ENCODE measurements at regions of chr1 and their contacts with region 1.

Region 1: DNA sequence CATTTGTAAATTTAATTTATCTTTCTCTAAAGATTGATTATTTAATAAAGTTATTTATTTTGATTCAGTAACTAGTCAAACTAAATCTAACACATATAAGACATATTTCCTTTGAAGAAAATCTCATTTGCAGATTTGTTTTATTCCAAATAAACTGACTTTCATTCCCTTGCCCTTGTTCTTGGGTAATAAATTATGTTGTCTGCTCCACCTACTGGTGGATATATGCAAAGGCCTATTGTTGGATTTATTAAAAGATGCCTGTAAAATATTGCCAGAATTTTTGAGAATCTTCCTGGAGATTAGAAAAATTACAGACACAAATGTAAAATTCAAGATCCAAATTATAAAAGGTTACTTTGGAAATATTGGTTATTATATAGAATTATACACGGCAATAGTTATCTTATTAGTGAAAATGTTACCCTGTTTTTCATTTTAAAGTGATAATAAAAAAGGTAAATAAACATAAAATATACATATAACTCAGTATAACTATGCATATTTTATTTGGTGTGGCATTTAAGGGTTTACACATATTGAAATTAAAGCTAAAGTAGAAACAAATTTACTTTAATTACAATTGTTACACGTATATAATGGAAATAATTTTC is 116.1 kb downstream of the SPATA17 start:
- DNase-seq: no peak
- ATAC-seq: 0 out of 3 replicates have a peak, but pooled peaks have one; percentile 40
- H3K4me3 ChIP-seq: no peak overlapping the region
- H3K27ac ChIP-seq: no peak overlapping the region
- H3K4me1 ChIP-seq: no peaks in the 10 kb centered on the region
- H3K27me3 ChIP-seq: no peaks in the 10 kb centered on the region
- CTCF ChIP-seq: peak; percentile 50 to 68 (median 54); a peak in 5 of 6 replicates
- EP300 ChIP-seq: no peak
- POLR2A ChIP-seq: no peak
- RAD21 ChIP-seq: peak; percentile 70

Region 2: DNA sequence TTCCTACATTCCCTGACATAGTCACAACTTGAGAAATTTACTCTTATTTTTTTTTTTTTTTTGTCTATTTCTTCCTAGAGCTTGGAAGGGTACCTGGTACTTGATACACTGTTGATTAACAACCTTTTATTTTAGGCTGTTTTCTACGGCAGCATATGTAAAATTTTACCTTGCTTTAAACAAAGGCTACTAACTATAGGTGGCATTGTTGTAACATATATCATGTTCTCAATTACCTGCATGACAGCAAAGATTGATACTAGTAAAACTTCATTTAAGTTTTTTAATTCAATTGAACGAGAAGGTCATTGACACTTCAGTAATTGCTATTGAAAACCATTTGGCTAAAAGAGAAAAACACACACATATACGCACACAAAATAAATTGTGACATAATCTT is 785.7 kb before region 1 on chr1:
- CTCF ChIA-PET with region 1: no interaction called
- POLR2A ChIA-PET with region 1: no interaction called
- RAD21 ChIA-PET with region 1: no interaction called
- SMC1A ChIA-PET with region 1: no interaction called
- in situ Hi-C with region 1: no loop called
- intact Hi-C with region 1: loop called (anchors 5 kb)
- DNase-seq: no peak
- ATAC-seq: no peak
- H3K4me3 ChIP-seq: no peak overlapping the region
- H3K27ac ChIP-seq: no peak overlapping the region
- H3K4me1 ChIP-seq: no peaks in the 10 kb centered on the region
- H3K27me3 ChIP-seq: no peaks in the 10 kb centered on the region; a peak in 1 of 4 replicates
- CTCF ChIP-seq: peak in 1 of 3 experiments; percentile 37; a peak in 2 of 6 replicates
- EP300 ChIP-seq: no peak
- POLR2A ChIP-seq: no peak
- RAD21 ChIP-seq: 0 out of 2 replicates have a peak, but pooled peaks have one; percentile 12

Region 3: GRCh38 chr1:217431393-217431792 is 315.9 kb before region 1 on chr1:
- CTCF ChIA-PET with region 1: no interaction called
- POLR2A ChIA-PET with region 1: no interaction called
- RAD21 ChIA-PET with region 1: no interaction called
- SMC1A ChIA-PET with region 1: no interaction called
- in situ Hi-C with region 1: no loop called
- intact Hi-C with region 1: loop called (anchors 5 kb)
- DNase-seq: no peak
- ATAC-seq: peak; percentile 40; the same call in 1 of the 3 replicates
- H3K4me3 ChIP-seq: no peak overlapping the region
- H3K27ac ChIP-seq: no peak overlapping the region
- H3K4me1 ChIP-seq: no peaks in the 10 kb centered on the region
- H3K27me3 ChIP-seq: no peaks in the 10 kb centered on the region
- CTCF ChIP-seq: peak in 2 of 3 experiments; percentile 10 to 28; a peak in 3 of 6 replicates
- EP300 ChIP-seq: no peak
- POLR2A ChIP-seq: no peak
- RAD21 ChIP-seq: peak; percentile 51

Region 4: DNA sequence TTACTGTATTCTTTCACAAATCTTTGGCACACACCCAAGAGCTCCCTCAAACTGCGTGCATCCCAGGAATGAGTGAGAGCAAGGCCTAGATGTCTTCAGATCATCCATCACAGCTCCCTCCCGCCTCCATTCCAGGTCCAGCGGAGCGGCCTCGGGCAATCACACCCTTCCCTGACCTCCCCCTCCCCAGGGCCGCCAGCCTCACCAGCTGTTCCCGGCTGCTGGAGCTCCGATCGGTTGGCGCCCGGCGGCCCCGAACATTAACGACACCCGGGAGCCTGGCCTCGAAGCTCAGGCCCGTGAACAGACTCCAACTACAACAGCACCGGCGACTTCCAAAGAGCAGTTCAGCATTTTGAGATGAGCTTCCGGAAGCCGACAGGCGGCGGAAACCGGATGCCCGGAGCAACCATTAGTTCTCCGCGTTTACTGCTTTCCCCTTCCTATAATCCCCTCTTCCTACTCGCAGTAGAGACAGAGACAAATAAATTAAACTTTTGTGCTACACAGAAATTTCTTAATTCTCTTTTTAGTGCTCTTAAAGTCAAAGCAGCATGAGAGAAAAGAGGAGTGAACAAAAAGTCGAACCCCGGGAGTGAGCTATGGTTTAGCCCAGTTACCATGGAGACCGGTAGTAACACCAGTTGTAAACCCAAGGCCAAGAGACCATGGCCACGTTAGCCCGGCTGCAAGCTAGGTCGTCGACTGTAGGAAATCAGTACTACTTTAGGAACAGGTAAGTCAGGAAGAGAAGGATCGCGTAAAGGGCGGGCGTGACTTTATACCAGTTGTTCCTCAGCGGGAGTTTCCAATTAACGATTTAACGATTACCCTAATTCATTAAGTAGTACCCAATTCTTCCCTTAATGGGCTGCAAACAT is 116.3 kb before region 1 on chr1 and contains the starts of genes GPATCH2 and SPATA17:
- CTCF ChIA-PET with region 1: no interaction called
- POLR2A ChIA-PET with region 1: no interaction called
- RAD21 ChIA-PET with region 1: no interaction called
- SMC1A ChIA-PET with region 1: no interaction called
- in situ Hi-C with region 1: no loop called
- intact Hi-C with region 1: no loop called
- DNase-seq: peak; percentile 77
- ATAC-seq: peak; percentile 95
- H3K4me3 ChIP-seq: peak within 1 kb of the TSS; percentile 84
- H3K27ac ChIP-seq: peak within 1 kb of the TSS; percentile 94
- H3K4me1 ChIP-seq: peaks cover 4% of the 10 kb centered on the region; the same call in 1 of the 2 replicates
- H3K27me3 ChIP-seq: no peaks in the 10 kb centered on the region; a peak in 1 of 4 replicates
- CTCF ChIP-seq: 0 out of 6 replicates have a peak, but pooled peaks of 2 of the 3 experiments have one; percentile 6 to 16
- EP300 ChIP-seq: 0 out of 4 replicates have a peak, but pooled peaks of 1 of the 2 experiments have one; percentile 9
- POLR2A ChIP-seq: peak; percentile 90
- RAD21 ChIP-seq: no peak
- polyA plus RNA-seq, gene GPATCH2: 3.2 to 4.8 TPM
- polyA plus RNA-seq, gene SPATA17: 0.08 TPM in 1 of 2 experiments, not detected in the other

Region 5: GRCh38 chr1:217924924-217925323 is 177.7 kb after region 1 on chr1:
- CTCF ChIA-PET with region 1: no interaction called
- POLR2A ChIA-PET with region 1: no interaction called
- RAD21 ChIA-PET with region 1: no interaction called
- SMC1A ChIA-PET with region 1: no interaction called
- in situ Hi-C with region 1: no loop called
- intact Hi-C with region 1: no loop called
- DNase-seq: no peak
- ATAC-seq: no peak
- H3K4me3 ChIP-seq: no peak overlapping the region
- H3K27ac ChIP-seq: no peak overlapping the region
- H3K4me1 ChIP-seq: no peaks in the 10 kb centered on the region
- H3K27me3 ChIP-seq: no peaks in the 10 kb centered on the region
- CTCF ChIP-seq: no peak
- EP300 ChIP-seq: no peak
- POLR2A ChIP-seq: no peak
- RAD21 ChIP-seq: no peak

Measured in GM12878 (cell line).